Dorsolateral prefrontal cortex (tissue), 120 donors: ENCODE measurements at regions of chr7 and their contacts with region 1.

Region 1: DNA sequence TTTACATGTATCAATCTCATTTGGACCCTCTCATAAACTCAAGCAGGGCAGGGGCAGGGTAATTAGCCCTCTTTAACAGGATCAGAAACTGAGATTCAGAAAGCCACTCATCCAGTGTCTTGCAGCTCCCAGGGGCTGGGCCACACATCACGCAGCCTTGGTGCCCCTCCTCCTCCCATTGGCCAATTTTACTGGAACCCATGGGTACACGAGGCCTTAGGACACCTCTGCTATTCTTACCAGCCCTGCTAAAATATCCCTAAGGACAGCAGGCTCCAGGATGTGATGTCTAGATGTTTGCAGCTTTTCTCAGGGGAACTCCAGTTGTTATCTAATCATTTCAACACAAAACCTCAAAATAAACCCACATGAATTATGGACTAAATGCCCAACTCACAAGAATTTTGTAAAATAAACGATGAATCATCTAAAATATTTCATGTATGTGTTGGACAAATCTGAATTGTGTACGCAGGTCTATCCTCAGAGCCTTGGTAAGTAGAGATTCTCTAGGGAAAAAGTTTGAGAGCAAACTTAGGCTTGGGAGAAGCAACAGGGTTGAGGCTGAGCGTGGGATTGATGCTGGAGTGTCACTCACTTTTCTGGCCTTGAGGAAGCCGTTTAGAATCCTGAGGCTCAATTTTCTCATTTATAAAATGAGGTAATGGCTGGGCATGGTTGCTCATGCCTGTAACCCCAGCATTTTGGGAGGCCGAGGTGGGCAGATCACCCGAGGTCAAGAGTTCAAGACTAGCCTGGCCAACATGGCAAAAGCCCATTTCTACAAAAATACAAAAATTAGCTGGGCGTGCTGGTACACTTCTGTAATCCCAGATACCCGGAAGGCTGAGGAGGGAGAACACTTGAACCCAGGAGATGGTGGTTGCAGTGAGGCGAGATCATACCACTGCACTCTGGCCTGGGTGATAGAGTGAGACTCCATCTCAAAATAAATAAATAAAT is 69.7 kb upstream of the TNS3 start:
- DNase-seq: no peak
- H3K4me3 ChIP-seq: no peak overlapping the region
- H3K27ac ChIP-seq: peak overlapping the region in 1 of 59 donors; percentile 32
- H3K27me3 ChIP-seq: no peaks in the 10 kb centered on the region
- CTCF ChIP-seq: no peak

Region 2: GRCh38 chr7:47501406-47501805 is 150.2 kb before region 1 on chr7:
- intact Hi-C with region 1: loop called in 1 of 2 experiments (anchors 10 kb)
- DNase-seq: peak in 1 of 10 donors; percentile 3
- H3K4me3 ChIP-seq: no peak overlapping the region
- H3K27ac ChIP-seq: peak overlapping the region in 1 of 59 donors; percentile 46
- H3K27me3 ChIP-seq: peaks cover 0 to 8% (median 0%) of the 10 kb centered on the region in 45 donors
- CTCF ChIP-seq: no peak

Region 3: GRCh38 chr7:47622946-47623640 is 28.5 kb before region 1 on chr7:
- intact Hi-C with region 1: no loop called
- DNase-seq: no peak
- H3K4me3 ChIP-seq: no peak overlapping the region
- H3K27ac ChIP-seq: peak overlapping the region in 32 of 59 donors; percentile 1 to 75 (median 44)
- H3K27me3 ChIP-seq: peaks cover 0 to 7% (median 0%) of the 10 kb centered on the region in 45 donors
- CTCF ChIP-seq: no peak

Region 4: GRCh38 chr7:47690902-47691558 is 39.4 kb after region 1 on chr7:
- intact Hi-C with region 1: no loop called
- DNase-seq: peak in 1 of 10 donors; percentile 43
- H3K4me3 ChIP-seq: no peak overlapping the region
- H3K27ac ChIP-seq: peak overlapping the region in 25 of 59 donors; percentile 0 to 75 (median 22)
- H3K27me3 ChIP-seq: no peaks in the 10 kb centered on the region
- CTCF ChIP-seq: no peak